ENCODE measurements at regions of chr11 and their contacts with region 1.

Region 1: DNA sequence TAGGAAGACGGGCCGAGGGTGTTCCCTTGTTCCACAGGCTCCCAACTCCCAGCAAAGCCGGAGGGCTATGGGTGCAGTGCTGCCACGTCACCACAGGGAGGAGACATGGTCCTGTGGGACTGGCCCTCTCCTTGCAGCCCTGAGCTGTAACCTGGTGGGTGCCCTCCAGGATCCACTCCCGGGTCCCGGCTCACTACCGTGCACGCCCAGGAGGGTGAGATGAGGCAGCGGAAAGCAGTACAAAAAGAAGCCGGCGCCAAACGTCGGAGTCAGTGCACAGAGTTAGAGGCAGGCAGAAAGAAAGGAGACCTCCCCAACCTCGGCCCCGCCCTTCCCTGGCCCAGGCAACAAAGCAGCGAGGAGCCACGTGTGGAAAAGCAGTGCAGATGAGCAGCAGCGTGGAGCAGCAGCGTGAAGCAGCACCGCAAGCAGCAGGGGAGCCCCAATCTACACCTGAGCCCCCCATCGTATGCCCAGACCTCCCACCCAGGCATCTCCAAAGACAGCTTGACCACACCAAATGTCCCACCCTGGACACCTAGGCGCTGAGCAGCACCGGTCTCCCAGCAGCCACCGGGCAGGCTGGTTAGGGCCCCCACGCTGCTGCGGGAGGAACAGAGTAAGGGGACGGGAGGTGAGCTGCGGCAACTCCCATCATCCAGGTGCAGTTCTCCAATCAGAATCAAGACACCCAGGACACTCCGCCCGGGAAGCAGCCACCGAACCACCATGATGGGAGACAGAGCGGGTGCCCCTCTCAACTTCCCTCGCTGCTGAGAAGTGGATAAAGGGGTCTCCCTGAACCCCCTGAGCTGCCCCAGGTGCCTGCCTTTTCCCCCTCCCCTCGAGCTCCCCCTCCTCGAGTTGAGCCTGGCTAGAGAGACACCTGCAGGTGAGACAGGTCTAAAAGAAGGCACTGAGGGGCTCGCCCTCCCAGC is 28.8 kb downstream of the IGSF9B start:
- DNase-seq: peak; percentile 69
- H3K4me3 ChIP-seq: peak overlapping the region in 2 of 4 donors; percentile 3 to 36
- H3K27ac ChIP-seq: peak overlapping the region in 1 of 4 donors; percentile 26
- H3K4me1 ChIP-seq: peaks cover 8 to 13% (median 11%) of the 10 kb centered on the region in 4 donors
- H3K27me3 ChIP-seq: no peaks in the 10 kb centered on the region
- CTCF ChIP-seq: peak; percentile 83 to 86 (median 84)
- EP300 ChIP-seq: no peak
- POLR2A ChIP-seq: no peak

Region 2: DNA sequence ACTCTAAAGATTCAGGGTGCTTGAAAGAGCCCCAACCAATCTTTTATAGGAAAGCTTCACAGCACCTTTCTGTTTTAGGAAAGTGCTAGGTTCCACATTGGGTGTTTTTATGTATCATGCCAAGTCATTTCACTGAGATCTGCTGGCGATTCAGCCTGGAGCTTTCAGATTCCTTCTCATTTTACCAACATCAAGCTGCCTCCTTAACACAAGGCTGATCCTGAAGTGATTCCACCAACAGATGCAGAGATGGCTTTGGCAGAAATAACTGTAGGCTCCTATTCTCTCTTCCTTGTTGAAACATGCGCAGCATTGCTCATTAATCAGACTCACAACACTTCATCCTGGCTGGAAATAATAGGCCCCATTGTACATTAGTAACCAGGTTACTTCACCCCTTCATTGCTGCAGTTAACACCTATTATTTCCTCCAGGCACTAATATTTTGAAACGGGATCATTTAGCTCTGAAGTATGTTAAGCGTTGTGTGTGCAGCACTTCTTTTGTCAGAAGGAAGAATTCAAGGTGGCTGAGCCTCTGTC is 484.7 kb before region 1 on chr11:
- in situ Hi-C with region 1: no loop called
- intact Hi-C with region 1: no loop called
- DNase-seq: no peak
- H3K4me3 ChIP-seq: no peak overlapping the region
- H3K27ac ChIP-seq: no peak overlapping the region
- H3K4me1 ChIP-seq: no peaks in the 10 kb centered on the region
- H3K27me3 ChIP-seq: no peaks in the 10 kb centered on the region
- CTCF ChIP-seq: no peak
- EP300 ChIP-seq: no peak
- POLR2A ChIP-seq: no peak

Region 3: GRCh38 chr11:133656082-133656635 is 271.8 kb before region 1 on chr11:
- in situ Hi-C with region 1: no loop called
- intact Hi-C with region 1: no loop called
- DNase-seq: no peak
- H3K4me3 ChIP-seq: no peak overlapping the region
- H3K27ac ChIP-seq: no peak overlapping the region
- H3K4me1 ChIP-seq: no peaks in the 10 kb centered on the region
- H3K27me3 ChIP-seq: no peaks in the 10 kb centered on the region
- CTCF ChIP-seq: no peak
- EP300 ChIP-seq: no peak
- POLR2A ChIP-seq: no peak

Region 4: GRCh38 chr11:134139873-134140331 is 211.9 kb after region 1 on chr11:
- in situ Hi-C with region 1: loop called in 3 of 4 experiments (anchors 25 kb)
- intact Hi-C with region 1: no loop called
- DNase-seq: peak; percentile 60
- H3K4me3 ChIP-seq: no peak overlapping the region
- H3K27ac ChIP-seq: peak overlapping the region; percentile 28 to 73 (median 56)
- H3K4me1 ChIP-seq: peaks cover 0 to 6% (median 3%) of the 10 kb centered on the region in 4 donors
- H3K27me3 ChIP-seq: no peaks in the 10 kb centered on the region
- CTCF ChIP-seq: peak; percentile 77 to 89 (median 81)
- EP300 ChIP-seq: no peak
- POLR2A ChIP-seq: no peak